Caco-2 (cell line): ENCODE measurements at regions of chr1 and their contacts with region 1.

Region 1: DNA sequence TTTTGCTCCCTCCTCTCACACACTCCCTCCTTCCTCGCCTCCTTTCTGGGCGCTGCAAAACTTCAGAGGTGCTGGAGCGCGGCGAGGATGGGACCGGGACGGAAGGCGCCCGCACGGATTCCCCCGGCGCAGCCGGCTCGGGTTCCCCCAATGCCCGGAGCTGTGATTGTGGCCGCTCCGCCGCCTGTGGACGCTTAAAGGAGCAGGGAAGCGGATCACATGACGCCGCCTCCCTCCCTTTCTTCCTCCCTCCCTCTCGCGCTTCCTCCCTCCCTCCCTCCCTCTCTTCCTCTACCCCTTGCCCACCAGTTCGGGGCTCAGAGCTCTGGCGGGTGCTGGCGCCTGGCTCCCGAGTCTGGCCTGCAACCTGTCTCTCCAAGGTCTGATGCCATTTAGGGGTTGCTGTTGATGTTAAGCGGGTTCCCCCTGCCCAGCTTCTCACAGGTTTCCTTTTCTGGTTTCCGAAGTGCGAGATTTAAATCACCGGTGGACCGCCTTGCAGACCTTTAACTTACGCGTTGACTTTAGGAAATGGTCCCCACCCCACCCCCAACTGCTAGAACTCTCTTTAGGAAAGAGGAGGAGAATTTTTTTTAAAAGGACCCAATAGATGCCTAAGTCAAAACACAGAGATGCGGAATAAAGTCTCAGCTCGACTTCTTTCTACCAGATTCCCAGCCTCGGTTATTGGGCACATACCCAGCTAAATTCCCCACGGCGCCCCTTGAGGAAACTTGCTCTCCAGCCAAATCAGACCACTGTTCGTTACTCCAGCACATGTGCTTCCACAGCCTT is at the start of gene WLS:
- DNase-seq: peak; percentile 65 to 73
- H3K4me3 ChIP-seq: peak within 1 kb of the TSS; percentile 67
- H3K4me3 Mint-ChIP-seq: peak within 1 kb of the TSS; percentile 73
- H3K27ac Mint-ChIP-seq: peak within 1 kb of the TSS; percentile 75
- H3K4me1 ChIP-seq: no peaks in the 10 kb centered on the region
- H3K4me1 Mint-ChIP-seq: no peaks in the 10 kb centered on the region
- H3K27me3 ChIP-seq: no peaks in the 10 kb centered on the region
- H3K27me3 Mint-ChIP-seq: no peaks in the 10 kb centered on the region
- CTCF ChIP-seq: peak in 1 of 2 experiments; percentile 0
- total RNA-seq, gene WLS: 70.6 and 72.3 TPM in 2 replicates

Region 2: DNA sequence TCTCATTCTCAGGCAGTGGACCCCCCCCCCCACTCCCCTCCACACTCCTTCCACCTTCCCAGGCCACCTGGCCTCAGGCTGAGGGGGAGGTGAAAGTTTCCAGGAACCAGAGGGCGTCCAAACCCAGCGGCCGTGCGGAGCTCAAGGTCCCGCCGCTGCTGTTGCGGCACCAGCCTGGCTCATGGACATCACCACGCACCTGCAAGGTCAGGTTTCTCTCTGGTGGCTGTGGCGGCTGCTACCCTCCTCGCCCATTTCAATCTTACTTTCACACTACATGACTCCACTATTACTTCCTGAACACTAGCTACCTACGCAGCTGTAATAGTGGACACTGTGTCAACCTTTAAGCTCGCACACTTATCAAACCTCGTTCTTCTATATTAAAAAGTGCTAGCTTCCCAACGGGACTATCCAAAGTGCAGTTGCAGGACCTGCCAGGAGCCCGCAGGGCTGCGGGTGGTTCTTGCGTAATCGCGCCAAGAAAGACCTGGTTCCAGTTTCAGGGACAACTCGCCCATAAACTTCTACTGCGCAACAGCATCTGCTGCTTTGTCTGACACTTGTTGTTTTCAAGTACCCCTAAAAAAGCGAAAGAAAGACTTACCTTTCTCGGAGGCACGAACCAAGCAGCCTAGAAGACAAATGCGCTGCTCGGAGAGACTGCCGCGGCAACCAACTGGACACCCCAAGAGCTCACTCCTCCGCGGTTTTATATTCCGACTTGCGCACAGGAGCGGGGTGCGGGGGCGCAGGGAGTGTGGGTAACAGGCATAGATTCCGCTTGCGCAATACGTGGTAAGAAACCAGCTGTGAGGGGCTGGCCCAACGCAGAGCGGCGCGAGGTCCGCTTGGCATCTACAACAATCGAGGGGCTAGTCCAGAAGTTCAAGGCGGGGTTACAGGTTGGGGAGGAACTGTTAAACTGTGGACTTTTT is 182.3 kb before region 1 on chr1 and contains the start of gene DIRAS3:
- CTCF ChIA-PET with region 1: no interaction called
- POLR2A ChIA-PET with region 1: no interaction called
- intact Hi-C with region 1: no loop called
- DNase-seq: no peak
- H3K4me3 ChIP-seq: no peak within 1 kb of the TSS
- H3K4me3 Mint-ChIP-seq: no peak within 1 kb of the TSS
- H3K27ac Mint-ChIP-seq: no peak within 1 kb of the TSS
- H3K4me1 ChIP-seq: no peaks in the 10 kb centered on the region
- H3K4me1 Mint-ChIP-seq: no peaks in the 10 kb centered on the region
- H3K27me3 ChIP-seq: no peaks in the 10 kb centered on the region
- H3K27me3 Mint-ChIP-seq: no peaks in the 10 kb centered on the region
- CTCF ChIP-seq: no peak
- total RNA-seq, gene DIRAS3: not detected in 2 replicates

Region 3: GRCh38 chr1:68162761-68163160 is 69.8 kb before region 1 on chr1:
- CTCF ChIA-PET with region 1: no interaction called
- POLR2A ChIA-PET with region 1: no interaction called
- intact Hi-C with region 1: loop called (anchors 10 kb)
- DNase-seq: no peak
- H3K4me3 ChIP-seq: no peak overlapping the region
- H3K4me3 Mint-ChIP-seq: no peak overlapping the region
- H3K27ac Mint-ChIP-seq: no peak overlapping the region
- H3K4me1 ChIP-seq: no peaks in the 10 kb centered on the region; the same call in 1 of the 2 replicates
- H3K4me1 Mint-ChIP-seq: no peaks in the 10 kb centered on the region
- H3K27me3 ChIP-seq: no peaks in the 10 kb centered on the region
- H3K27me3 Mint-ChIP-seq: no peaks in the 10 kb centered on the region
- CTCF ChIP-seq: no peak

Region 4: GRCh38 chr1:68197891-68198290 is 34.7 kb before region 1 on chr1:
- CTCF ChIA-PET with region 1: interaction called, 3 read pairs
- POLR2A ChIA-PET with region 1: interaction called, 7 read pairs
- intact Hi-C with region 1: loop called (anchors 2 kb)
- DNase-seq: peak in 1 of 2 experiments; percentile 34
- H3K4me3 ChIP-seq: no peak overlapping the region
- H3K4me3 Mint-ChIP-seq: peak overlapping the region; percentile 58
- H3K27ac Mint-ChIP-seq: peak overlapping the region; percentile 85
- H3K4me1 ChIP-seq: peaks cover 37% of the 10 kb centered on the region
- H3K4me1 Mint-ChIP-seq: peaks cover 26% of the 10 kb centered on the region
- H3K27me3 ChIP-seq: no peaks in the 10 kb centered on the region
- H3K27me3 Mint-ChIP-seq: no peaks in the 10 kb centered on the region
- CTCF ChIP-seq: no peak

Region 5: GRCh38 chr1:68321084-68321685 is 88.6 kb after region 1 on chr1:
- CTCF ChIA-PET with region 1: interaction called, 4 read pairs
- POLR2A ChIA-PET with region 1: interaction called, 5 read pairs
- intact Hi-C with region 1: loop called (anchors 5 kb)
- DNase-seq: peak; percentile 70 to 74
- H3K4me3 ChIP-seq: no peak overlapping the region
- H3K4me3 Mint-ChIP-seq: no peak overlapping the region
- H3K27ac Mint-ChIP-seq: no peak overlapping the region
- H3K4me1 ChIP-seq: no peaks in the 10 kb centered on the region
- H3K4me1 Mint-ChIP-seq: no peaks in the 10 kb centered on the region
- H3K27me3 ChIP-seq: no peaks in the 10 kb centered on the region
- H3K27me3 Mint-ChIP-seq: no peaks in the 10 kb centered on the region
- CTCF ChIP-seq: peak; percentile 46 to 81